ENCODE measurements at regions of chr19 and their contacts with region 1.

Region 1: DNA sequence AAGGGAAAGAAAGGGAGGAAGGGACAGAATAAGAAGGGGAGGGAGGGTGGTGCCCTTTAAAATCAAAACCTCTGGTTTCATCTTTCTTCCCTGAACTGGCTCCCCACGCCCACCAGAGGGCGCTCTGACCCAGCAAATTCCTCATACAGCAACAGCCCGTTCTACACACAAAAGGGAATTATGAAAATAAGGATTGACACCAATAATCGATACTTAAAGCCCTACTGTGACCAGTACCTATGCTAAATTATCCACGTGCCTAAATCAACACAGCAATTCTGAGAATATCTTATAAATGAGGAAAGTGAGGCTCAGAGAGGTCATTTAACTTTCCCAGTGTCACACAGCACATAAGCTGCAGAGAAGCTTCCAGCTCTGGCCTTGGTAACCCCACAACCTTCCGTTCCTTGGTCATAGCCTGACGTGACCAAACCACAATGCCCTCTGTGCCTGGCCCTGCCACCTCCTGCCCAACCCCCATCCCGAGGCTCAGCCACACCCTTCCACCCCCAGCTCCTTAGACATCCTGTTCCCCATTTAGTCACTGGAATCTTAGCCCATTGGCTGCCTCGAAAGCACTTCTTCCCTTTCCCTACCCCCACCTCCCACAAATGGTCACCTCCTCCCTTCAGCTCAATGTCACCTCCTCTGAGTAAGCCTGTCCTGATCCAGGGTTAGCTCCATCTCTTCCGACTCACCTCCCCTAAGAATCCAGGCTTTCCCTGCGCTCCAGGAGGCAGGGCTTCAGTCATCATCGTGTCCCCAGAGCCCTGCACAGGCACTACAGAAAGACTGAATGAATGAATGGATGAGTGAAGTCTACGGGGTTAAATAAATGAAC is 34.2 kb upstream of the PNMA8B start:
- DNase-seq: peak; percentile 99 to 100 (median 100)
- H3K4me3 ChIP-seq: peak overlapping the region in 2 of 3 experiments; percentile 11 to 57
- H3K4me3 Mint-ChIP-seq: peak overlapping the region; percentile 49 to 82
- H3K27ac ChIP-seq: peak overlapping the region; percentile 85 to 91
- H3K27ac Mint-ChIP-seq: peak overlapping the region; percentile 95 to 99 (median 98)
- H3K4me1 ChIP-seq: peaks cover 38 to 43% of the 10 kb centered on the region in 2 donors
- H3K4me1 Mint-ChIP-seq: peaks cover 43% of the 10 kb centered on the region
- H3K27me3 ChIP-seq: no peaks in the 10 kb centered on the region
- H3K27me3 Mint-ChIP-seq: peaks cover 5 to 9% (median 9%) of the 10 kb centered on the region in 3 donors
- CTCF ChIP-seq: peak; percentile 95

Region 2: GRCh38 chr19:46542428-46543230 is 12.8 kb after region 1 on chr19:
- intact Hi-C with region 1: loop called (anchors 1 to 2 kb)
- DNase-seq: peak; percentile 88 to 97 (median 92)
- H3K4me3 ChIP-seq: no peak overlapping the region
- H3K4me3 Mint-ChIP-seq: peak overlapping the region in 1 of 2 donors; percentile 9
- H3K27ac ChIP-seq: no peak overlapping the region
- H3K27ac Mint-ChIP-seq: peak overlapping the region; percentile 42 to 97 (median 87)
- H3K4me1 ChIP-seq: peaks cover 24 to 48% of the 10 kb centered on the region in 2 donors
- H3K4me1 Mint-ChIP-seq: peaks cover 33% of the 10 kb centered on the region
- H3K27me3 ChIP-seq: no peaks in the 10 kb centered on the region
- H3K27me3 Mint-ChIP-seq: peaks cover 2 to 3% (median 2%) of the 10 kb centered on the region in 3 donors
- CTCF ChIP-seq: peak; percentile 91

Region 3: GRCh38 chr19:46571531-46571930 is 41.7 kb after region 1 on chr19:
- intact Hi-C with region 1: loop called in 1 of 2 experiments (anchors 1 kb)
- DNase-seq: no peak
- H3K4me3 ChIP-seq: no peak overlapping the region
- H3K4me3 Mint-ChIP-seq: no peak overlapping the region
- H3K27ac ChIP-seq: no peak overlapping the region
- H3K27ac Mint-ChIP-seq: no peak overlapping the region
- H3K4me1 ChIP-seq: peaks cover 13 to 17% of the 10 kb centered on the region in 2 donors
- H3K4me1 Mint-ChIP-seq: peaks cover 17% of the 10 kb centered on the region
- H3K27me3 ChIP-seq: no peaks in the 10 kb centered on the region
- H3K27me3 Mint-ChIP-seq: peaks cover 3 to 10% (median 5%) of the 10 kb centered on the region in 3 donors
- CTCF ChIP-seq: no peak

Region 4: GRCh38 chr19:46661020-46661731 is 131.3 kb after region 1 on chr19 and contains the start of gene DACT3:
- intact Hi-C with region 1: loop called (anchors 5 to 10 kb)
- DNase-seq: peak; percentile 100
- H3K4me3 ChIP-seq: peak within 1 kb of the TSS; percentile 23 to 68 (median 29)
- H3K4me3 Mint-ChIP-seq: peak within 1 kb of the TSS; percentile 76 to 95
- H3K27ac ChIP-seq: peak within 1 kb of the TSS; percentile 21 to 82
- H3K27ac Mint-ChIP-seq: peak within 1 kb of the TSS; percentile 83 to 95 (median 91)
- H3K4me1 ChIP-seq: peaks cover 27 to 31% of the 10 kb centered on the region in 2 donors
- H3K4me1 Mint-ChIP-seq: peaks cover 20% of the 10 kb centered on the region
- H3K27me3 ChIP-seq: peaks cover 28 to 29% of the 10 kb centered on the region in 2 donors
- H3K27me3 Mint-ChIP-seq: peaks cover 35 to 56% (median 49%) of the 10 kb centered on the region in 3 donors
- CTCF ChIP-seq: no peak
- polyA plus RNA-seq, gene DACT3: 0.05 to 0.23 (median 0.09) TPM

Region 5: GRCh38 chr19:46746281-46747013 is 216.6 kb after region 1 on chr19 and contains the start of gene STRN4:
- intact Hi-C with region 1: loop called in 1 of 2 experiments (anchors 10 kb)
- DNase-seq: peak in 2 of 3 donors; percentile 49 to 56
- H3K4me3 ChIP-seq: peak within 1 kb of the TSS; percentile 85 to 97 (median 97)
- H3K4me3 Mint-ChIP-seq: peak within 1 kb of the TSS; percentile 98 to 99
- H3K27ac ChIP-seq: peak within 1 kb of the TSS in 1 of 2 donors; percentile 81
- H3K27ac Mint-ChIP-seq: peak within 1 kb of the TSS; percentile 84 to 96 (median 90)
- H3K4me1 ChIP-seq: peaks cover 42 to 47% of the 10 kb centered on the region in 2 donors
- H3K4me1 Mint-ChIP-seq: peaks cover 49% of the 10 kb centered on the region
- H3K27me3 ChIP-seq: no peaks in the 10 kb centered on the region
- H3K27me3 Mint-ChIP-seq: peaks cover 0 to 1% (median 0%) of the 10 kb centered on the region in 3 donors
- CTCF ChIP-seq: no peak
- polyA plus RNA-seq, gene STRN4: 37.5 to 239 (median 48.0) TPM